ENCODE measurements at regions of chr12 and their contacts with region 1.

Region 1: GRCh38 chr12:80837348-80837985 is 100.3 kb downstream of the LIN7A start:
- DNase-seq: no peak
- ATAC-seq: peak; percentile 81
- H3K4me3 ChIP-seq: no peak overlapping the region
- H3K27ac ChIP-seq: no peak overlapping the region
- H3K4me1 ChIP-seq: peaks cover 0 to 1% of the 10 kb centered on the region in 2 donors
- H3K27me3 ChIP-seq: no peaks in the 10 kb centered on the region

Region 2: DNA sequence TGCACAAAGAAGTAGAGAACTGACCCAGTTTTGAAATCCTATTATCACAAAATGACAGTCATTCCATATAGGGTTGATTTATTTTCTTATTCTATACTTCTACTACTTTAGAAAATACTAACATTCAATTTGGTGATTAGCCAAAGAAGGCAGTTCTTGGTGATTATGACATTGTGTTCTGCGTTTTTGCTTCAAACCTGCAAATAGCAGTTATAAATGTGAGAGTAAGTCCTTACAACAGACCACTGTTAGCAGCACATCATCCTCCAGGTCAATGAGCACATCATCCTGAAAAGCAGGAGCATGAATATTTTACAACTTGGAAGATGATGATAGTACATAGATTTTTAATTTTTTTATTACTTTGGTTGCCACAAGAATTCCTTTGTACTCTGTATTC is 47.2 kb after region 1 on chr12:
- intact Hi-C with region 1: no loop called
- DNase-seq: no peak
- ATAC-seq: no peak
- H3K4me3 ChIP-seq: no peak overlapping the region
- H3K27ac ChIP-seq: no peak overlapping the region
- H3K4me1 ChIP-seq: no peaks in the 10 kb centered on the region
- H3K27me3 ChIP-seq: no peaks in the 10 kb centered on the region

Region 3: GRCh38 chr12:81128930-81129554 is 291.6 kb after region 1 on chr12:
- intact Hi-C with region 1: loop called in 1 of 2 experiments (anchors 5 kb)
- DNase-seq: no peak
- ATAC-seq: no peak
- H3K4me3 ChIP-seq: no peak overlapping the region
- H3K27ac ChIP-seq: no peak overlapping the region
- H3K4me1 ChIP-seq: no peaks in the 10 kb centered on the region
- H3K27me3 ChIP-seq: no peaks in the 10 kb centered on the region

Region 4: GRCh38 chr12:81257947-81258551 is 420.6 kb after region 1 on chr12:
- intact Hi-C with region 1: loop called in 1 of 2 experiments (anchors 5 kb)
- DNase-seq: no peak
- ATAC-seq: no peak
- H3K4me3 ChIP-seq: no peak overlapping the region
- H3K27ac ChIP-seq: no peak overlapping the region
- H3K4me1 ChIP-seq: no peaks in the 10 kb centered on the region
- H3K27me3 ChIP-seq: no peaks in the 10 kb centered on the region